Psoas muscle (tissue), 8 donors: ENCODE measurements at regions of chr17 and their contacts with region 1.

Region 1: DNA sequence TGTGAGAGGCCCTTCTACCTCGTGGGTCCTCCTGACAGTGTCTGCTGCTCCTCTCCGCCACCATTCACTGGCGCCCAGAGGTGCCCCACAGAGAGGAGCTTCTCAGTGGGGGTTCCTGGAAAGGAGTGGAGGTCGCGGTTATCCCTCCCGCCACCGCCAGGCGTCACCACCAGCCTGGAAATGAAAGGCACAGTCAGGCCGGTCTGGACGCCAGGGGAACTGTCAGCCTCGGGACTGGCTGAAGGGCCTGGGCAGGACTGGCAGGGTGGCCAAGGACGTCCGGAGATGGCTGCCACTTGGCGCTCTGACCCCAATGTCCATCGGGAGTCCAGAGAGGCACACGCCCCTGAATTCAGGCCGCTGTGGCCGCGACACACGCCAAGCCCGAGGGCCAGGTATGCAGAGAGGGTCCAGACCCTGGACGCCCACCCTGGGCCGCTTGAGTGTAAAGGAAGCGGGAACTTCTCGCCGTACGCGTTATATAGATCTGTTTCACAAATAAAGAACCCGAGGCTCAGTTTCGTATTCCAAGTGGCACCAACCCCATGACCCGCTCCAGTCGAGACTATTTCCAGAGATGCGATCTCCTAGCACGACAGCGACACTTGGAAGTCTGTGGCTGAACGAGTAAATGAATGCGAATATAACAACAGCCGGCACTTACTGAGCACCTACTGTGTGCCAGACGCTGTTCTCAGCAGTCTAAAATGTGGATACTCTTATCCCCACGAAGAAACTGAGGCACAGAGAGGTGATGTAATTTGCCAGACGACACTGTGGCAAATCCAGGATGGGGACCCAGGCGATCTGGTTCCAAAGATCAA is 7.6 kb upstream of the NXPH3 start:
- DNase-seq: peak; percentile 92 to 96
- ATAC-seq: peak; percentile 73 to 84 (median 78)
- H3K4me3 ChIP-seq: peak overlapping the region; percentile 73
- H3K27ac ChIP-seq: peak overlapping the region; percentile 85
- H3K4me1 ChIP-seq: peaks cover 25% of the 10 kb centered on the region
- H3K27me3 ChIP-seq: no peaks in the 10 kb centered on the region
- CTCF ChIP-seq: peak; percentile 97

Region 2: DNA sequence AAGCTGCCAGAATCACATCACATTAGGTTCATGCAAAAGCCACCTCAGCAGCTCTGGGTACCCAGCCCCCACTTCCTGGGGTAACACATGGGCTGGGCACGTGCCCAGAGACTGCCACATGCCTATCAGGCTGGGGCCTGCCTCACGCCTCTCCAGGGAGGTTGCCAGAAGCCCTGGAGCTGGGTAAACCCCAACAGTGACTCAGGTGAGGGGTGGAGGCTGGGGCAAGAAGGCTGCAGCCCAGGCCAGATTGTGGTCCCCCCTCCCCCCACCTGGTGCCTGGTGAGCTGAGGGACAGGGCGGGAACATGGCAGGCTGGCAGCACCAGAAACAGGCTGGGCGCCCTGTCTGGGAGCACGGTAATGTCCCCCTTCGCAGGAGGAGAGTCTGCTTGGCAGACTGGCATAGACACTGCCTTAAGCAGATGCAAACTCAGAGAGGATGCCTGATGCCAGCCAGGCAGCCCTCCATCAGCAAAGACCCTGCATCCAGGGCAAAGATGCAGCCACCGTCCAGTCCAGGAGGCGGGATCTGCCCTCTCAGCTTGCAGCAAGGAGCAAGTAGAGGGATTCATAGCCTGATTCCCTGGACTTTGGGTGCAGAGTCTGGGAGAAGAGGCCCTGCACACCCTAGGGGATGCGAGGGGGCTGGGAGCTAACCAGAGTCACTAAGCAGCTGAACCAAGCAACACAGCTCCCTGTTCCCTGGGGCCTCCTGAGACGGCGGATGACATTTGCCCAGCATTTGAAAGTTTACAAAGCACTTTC is 44.2 kb before region 1 on chr17:
- intact Hi-C with region 1: no loop called
- DNase-seq: no peak
- ATAC-seq: peak in 2 of 4 donors; percentile 27 to 28
- H3K4me3 ChIP-seq: no peak overlapping the region
- H3K27ac ChIP-seq: no peak overlapping the region
- H3K4me1 ChIP-seq: no peaks in the 10 kb centered on the region
- H3K27me3 ChIP-seq: no peaks in the 10 kb centered on the region
- CTCF ChIP-seq: no peak

Region 3: GRCh38 chr17:49694847-49695683 is 127.0 kb after region 1 on chr17:
- intact Hi-C with region 1: loop called in 1 of 2 experiments (anchors 1 kb)
- DNase-seq: peak; percentile 48 to 64
- ATAC-seq: peak; percentile 42 to 48 (median 45)
- H3K4me3 ChIP-seq: no peak overlapping the region
- H3K27ac ChIP-seq: no peak overlapping the region
- H3K4me1 ChIP-seq: peaks cover 8% of the 10 kb centered on the region
- H3K27me3 ChIP-seq: no peaks in the 10 kb centered on the region
- CTCF ChIP-seq: peak; percentile 89

Region 4: DNA sequence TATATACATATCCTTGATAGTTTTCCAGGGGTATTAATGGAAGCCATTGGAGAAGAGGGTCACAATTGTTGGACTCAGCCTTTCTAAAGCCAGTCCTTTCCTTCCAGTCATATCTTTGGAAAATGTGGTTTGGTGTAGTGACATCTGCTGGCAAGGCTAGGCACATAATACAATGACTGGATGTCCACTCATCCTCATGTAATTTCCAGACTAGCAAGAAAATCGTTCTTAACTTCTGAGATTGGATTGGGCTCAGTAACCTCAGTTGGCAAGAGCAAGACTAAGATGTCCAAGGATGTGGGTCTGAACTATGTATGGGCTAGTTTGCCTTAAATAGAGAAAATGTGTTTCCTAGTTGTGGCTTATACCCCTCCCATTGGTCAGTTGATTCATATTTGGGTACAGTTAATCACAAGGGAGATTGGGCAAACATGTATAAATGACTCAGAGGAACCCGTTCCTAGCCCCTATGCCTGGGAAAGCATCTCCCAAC is 211.7 kb after region 1 on chr17:
- intact Hi-C with region 1: loop called (anchors 2 to 10 kb)
- DNase-seq: no peak
- ATAC-seq: peak; percentile 59 to 79 (median 72)
- H3K4me3 ChIP-seq: no peak overlapping the region
- H3K27ac ChIP-seq: no peak overlapping the region
- H3K4me1 ChIP-seq: peaks cover 15% of the 10 kb centered on the region
- H3K27me3 ChIP-seq: no peaks in the 10 kb centered on the region
- CTCF ChIP-seq: peak; percentile 48

Region 5: GRCh38 chr17:49851387-49852291 is 283.6 kb after region 1 on chr17:
- intact Hi-C with region 1: loop called (anchors 1 to 5 kb)
- DNase-seq: peak; percentile 76 to 87
- ATAC-seq: peak; percentile 72 to 89 (median 79)
- H3K4me3 ChIP-seq: peak overlapping the region; percentile 69
- H3K27ac ChIP-seq: peak overlapping the region; percentile 51
- H3K4me1 ChIP-seq: peaks cover 11% of the 10 kb centered on the region
- H3K27me3 ChIP-seq: no peaks in the 10 kb centered on the region
- CTCF ChIP-seq: peak; percentile 74